PC-9 (cell line): ENCODE measurements at regions of chr1 and their contacts with region 1.

Region 1: DNA sequence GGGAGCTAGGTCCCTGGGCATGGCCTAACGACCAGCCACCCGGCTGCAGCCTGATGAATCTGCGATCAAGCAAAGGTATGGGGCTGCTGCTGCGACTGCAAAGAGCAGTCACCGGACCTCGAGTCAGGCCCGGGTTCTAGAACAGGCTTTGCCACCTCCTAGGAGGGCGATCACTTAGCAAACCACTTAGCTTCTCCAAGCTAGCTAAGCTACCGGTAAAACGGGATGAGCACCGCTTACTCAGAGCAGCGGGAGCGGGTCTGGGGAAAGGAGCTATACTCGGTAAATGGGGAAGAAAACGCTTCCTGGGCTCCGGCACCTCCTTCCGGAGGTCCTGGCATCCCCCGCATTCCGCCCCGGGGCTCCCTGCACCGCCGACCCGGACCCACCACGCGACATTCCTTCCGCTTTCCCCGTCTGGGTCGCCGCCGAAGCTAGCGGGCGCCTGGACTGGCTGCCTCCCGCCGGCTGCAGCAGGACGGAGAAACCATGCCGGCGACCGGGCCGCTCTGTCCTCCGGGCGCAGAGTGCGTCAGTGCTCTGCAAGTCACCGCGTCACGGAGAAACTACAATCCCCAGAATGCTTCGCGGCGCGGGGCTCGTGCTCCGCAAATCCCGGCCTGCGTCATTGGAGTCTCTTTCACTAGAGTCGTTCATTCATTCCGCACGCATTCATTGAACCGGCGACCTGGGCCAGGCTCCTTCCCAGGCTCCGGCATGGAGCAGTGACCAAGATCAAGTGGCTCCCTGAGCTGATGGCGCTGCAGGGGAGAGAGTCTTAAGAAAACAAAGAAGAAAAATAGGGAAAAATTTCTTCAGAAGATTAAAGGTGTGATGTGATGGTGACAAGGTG is at the start of gene LSM10:
- DNase-seq: peak; percentile 87 to 92
- H3K4me3 ChIP-seq: peak within 1 kb of the TSS; percentile 85
- H3K27ac ChIP-seq: peak within 1 kb of the TSS; percentile 28; the same call in 1 of the 2 replicates
- H3K4me1 ChIP-seq: peaks cover 10% of the 10 kb centered on the region
- H3K27me3 ChIP-seq: no peaks in the 10 kb centered on the region
- CTCF ChIP-seq: no peak
- total RNA-seq, gene LSM10: 33.4 and 39.7 TPM in 2 replicates

Region 2: GRCh38 chr1:36350659-36351226 is 46.9 kb before region 1 on chr1:
- CTCF ChIA-PET with region 1: interaction called, 10 read pairs
- POLR2A ChIA-PET with region 1: no interaction called
- intact Hi-C with region 1: no loop called
- DNase-seq: peak; percentile 89 to 91
- H3K4me3 ChIP-seq: peak overlapping the region; percentile 41; the same call in 1 of the 2 replicates
- H3K27ac ChIP-seq: peak overlapping the region; percentile 97
- H3K4me1 ChIP-seq: peaks cover 67% of the 10 kb centered on the region
- H3K27me3 ChIP-seq: no peaks in the 10 kb centered on the region
- CTCF ChIP-seq: no peak

Region 3: DNA sequence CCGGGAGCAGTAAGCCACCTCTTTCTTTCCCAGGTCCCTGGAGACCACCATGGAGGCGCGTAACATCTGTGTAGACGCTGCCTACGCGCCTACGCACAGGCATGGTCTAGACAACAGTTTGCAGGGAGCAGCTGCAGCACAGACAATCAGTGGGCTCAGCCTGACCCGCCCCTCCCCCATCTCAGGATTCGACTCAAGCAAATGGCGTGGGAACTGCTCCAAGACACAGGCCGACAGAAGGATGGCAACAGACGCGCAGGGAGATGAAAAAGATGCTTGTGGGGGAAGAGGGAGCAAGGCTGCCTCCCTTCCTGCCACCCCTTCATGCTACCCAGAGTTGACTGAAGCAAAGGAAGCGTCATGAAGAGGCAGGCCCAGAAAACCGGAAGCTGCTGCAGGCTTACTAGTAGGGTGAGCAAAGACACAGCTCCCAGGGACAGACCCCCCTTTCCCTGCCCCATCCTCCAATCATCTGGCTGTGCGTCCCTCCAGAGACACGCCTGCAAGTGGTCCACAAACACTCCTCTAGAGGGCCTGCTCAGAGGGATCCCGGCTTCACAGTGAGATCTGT is 31.4 kb before region 1 on chr1:
- CTCF ChIA-PET with region 1: no interaction called
- POLR2A ChIA-PET with region 1: no interaction called
- intact Hi-C with region 1: no loop called
- DNase-seq: no peak
- H3K4me3 ChIP-seq: no peak overlapping the region
- H3K27ac ChIP-seq: no peak overlapping the region
- H3K4me1 ChIP-seq: peaks cover 9% of the 10 kb centered on the region; the same call in 1 of the 2 replicates
- H3K27me3 ChIP-seq: no peaks in the 10 kb centered on the region
- CTCF ChIP-seq: no peak

Region 4: DNA sequence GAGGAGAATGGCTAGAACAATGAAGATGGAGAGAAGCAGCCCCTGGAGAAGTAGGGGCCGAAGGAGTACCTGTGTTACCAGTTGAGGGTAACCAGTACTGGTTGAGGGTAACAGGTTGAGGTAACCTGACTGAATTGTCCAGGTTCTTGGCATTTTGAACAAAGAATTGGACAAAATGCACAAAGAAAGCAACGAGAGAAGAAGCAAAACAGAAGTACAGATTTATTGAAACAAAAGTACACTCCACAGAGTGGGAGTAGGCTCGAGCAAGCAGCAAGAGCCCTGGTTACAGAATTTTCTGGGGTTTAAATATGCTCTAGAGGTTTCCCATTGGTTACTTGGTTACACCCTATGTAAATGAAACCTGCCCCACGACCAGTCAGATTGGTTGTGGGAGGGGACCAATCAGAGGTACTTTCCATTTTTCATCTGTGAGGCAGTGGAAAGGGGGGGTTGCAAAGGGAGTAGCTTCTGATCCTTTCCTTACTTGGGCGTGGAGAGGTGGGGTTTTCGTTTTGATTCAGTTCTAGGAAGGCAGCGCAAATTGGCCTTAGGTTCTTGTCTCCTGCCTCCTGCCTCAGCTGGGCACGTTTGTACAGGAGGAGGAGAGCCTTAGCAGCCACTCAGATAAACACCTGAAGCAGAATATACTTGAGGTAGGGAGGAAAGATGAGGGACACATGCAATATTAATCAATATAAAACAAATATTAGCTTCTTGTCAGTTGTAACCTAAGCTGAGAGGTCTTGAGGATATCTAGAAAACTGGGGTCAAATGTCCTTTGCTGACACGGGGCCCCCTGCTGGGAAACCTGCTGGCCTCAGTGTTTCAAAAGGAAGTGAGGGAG is 14.3 kb after region 1 on chr1:
- CTCF ChIA-PET with region 1: interaction called, 14 read pairs
- POLR2A ChIA-PET with region 1: no interaction called
- intact Hi-C with region 1: no loop called
- DNase-seq: peak in 1 of 2 experiments; percentile 57
- H3K4me3 ChIP-seq: no peak overlapping the region
- H3K27ac ChIP-seq: no peak overlapping the region
- H3K4me1 ChIP-seq: peaks cover 24% of the 10 kb centered on the region
- H3K27me3 ChIP-seq: no peaks in the 10 kb centered on the region
- CTCF ChIP-seq: no peak